ACHN (cell line): ENCODE measurements at regions of chr13 and their contacts with region 1.

Region 1: GRCh38 chr13:44470638-44471562 is 97.3 kb downstream of the SERP2 start:
- DNase-seq: peak; percentile 54

Region 2: DNA sequence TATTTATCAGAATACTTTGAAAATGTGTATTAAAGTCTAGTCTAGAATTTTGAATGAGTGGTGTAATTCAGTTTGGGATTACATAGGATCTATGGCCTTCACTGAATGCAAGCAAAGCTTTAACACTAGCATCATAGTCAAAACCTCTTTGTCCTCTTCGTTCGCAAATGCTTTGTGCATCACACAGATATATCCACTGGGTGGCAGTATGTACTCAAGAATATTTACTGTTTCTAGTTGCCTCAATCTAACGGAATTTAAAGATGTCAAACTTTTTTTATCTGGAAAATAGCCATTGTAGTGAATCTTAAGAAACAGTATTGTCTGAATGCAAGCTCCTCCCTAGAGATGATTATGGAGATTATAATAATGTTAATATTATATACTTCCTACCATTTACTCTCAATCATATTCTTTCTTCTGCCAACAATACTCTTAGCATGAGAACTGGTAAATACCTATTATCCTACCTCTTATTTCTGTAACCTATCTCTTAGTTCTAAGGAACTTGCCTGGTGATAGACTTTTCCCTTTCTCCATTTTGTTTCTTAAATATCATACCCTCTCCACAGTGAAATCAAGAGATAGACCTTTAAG is 565.4 kb before region 1 on chr13:
- in situ Hi-C with region 1: loop called (anchors 25 kb)
- DNase-seq: peak; percentile 63

Region 3: DNA sequence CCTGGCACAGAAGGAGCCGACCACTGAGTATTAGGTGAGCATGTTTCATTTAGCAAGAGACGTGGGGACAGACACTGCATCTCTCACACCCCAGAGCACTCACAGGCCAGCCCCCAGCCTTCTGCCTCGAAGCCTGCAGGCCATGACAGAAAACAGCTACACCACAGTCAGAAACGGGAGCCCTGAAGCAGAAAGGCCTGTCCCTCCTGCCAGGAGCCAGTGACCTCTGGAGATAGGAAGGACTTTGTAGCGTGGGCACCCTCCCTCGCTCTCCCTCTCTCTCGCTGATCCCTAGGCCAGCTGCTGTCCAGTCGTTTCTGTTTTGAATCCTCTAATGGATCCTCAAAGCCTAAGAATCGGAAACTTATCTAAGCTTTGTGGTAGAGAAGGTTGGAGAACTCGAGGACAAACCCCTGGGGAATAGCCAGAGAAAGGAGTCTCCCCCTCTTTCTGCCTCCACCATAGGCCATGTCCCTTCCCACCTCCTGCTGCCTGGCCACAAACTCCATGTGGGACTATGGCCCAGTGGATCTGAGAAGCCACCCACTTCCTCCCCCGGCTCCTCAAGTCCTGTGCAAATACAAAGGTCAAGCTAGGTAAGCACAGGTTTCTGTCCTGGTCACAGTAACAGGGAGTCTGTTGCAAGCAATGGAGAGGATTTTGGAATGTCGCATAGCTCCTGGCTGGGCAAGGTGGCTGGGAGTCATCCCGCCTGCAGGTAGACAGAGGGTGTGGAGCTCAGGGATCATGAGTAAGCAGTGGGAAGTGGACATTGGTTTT is 423.3 kb after region 1 on chr13:
- in situ Hi-C with region 1: no loop called
- DNase-seq: no peak